Activated CD4-positive, alpha-beta memory T cell treated with anti-CD3 and anti-CD28 coated beads for 36 hours (primary cell): ENCODE measurements at regions of chr21 and their contacts with region 1.

Region 1: DNA sequence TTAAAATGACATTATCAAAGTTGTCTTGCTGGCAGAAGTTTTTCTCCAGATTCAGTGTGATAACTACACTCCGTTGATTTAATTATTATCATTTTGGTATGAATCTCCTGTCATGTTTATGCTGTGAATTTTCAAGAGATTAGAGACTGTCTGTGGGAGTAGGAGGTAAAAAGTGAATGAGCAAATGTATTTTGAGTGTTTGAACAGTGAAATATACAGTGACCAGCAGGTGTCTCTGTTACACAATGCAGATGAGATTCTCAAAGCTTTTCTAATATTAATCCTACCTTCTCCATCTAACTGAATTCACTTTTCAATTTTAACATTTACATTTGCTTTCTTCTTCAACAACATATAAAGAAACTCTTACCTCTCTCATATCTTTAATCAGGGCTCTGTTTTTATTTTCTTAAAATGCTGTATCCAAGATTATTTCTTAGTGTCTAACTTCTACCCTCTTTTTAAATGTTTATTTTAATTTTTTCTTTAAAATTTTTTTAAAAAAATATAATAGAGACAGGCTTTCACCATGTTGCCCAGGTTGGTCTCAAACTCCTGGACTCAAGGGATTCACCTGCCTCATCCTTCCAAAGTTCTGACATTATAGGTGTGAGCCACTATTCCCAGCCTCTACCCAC is 20.9 kb upstream of the HSPA13 start:
- DNase-seq: no peak
- H3K4me3 Mint-ChIP-seq: no peak overlapping the region
- H3K27ac Mint-ChIP-seq: no peak overlapping the region
- H3K4me1 Mint-ChIP-seq: no peaks in the 10 kb centered on the region
- H3K27me3 Mint-ChIP-seq: no peaks in the 10 kb centered on the region

Region 2: DNA sequence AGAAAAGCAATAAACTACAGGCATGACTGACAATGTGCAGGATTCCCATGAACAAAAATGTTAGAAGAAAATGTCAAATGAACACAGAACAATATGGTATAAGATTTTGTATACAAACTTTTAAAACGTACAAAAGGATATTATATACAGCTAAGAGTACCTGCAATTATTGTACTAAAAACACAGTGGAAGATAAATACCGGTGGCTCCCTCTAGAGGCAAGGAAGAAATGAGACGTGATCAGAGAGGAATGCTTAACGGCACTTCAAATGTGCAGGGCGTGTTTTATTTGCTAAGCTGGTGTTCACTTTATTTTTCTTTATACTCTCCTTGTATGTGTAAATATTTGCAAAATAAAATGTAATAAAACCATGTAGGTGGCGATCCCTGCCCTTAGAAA is 334.1 kb after region 1 on chr21:
- CTCF ChIA-PET with region 1: interaction called, 4 read pairs
- POLR2A ChIA-PET with region 1: no interaction called
- intact Hi-C with region 1: loop called (anchors 1 kb)
- DNase-seq: peak; percentile 38
- H3K4me3 Mint-ChIP-seq: no peak overlapping the region
- H3K27ac Mint-ChIP-seq: no peak overlapping the region
- H3K4me1 Mint-ChIP-seq: peaks cover 31% of the 10 kb centered on the region
- H3K27me3 Mint-ChIP-seq: no peaks in the 10 kb centered on the region

Region 3: GRCh38 chr21:14773777-14774345 is 370.1 kb after region 1 on chr21:
- CTCF ChIA-PET with region 1: interaction called, 5 read pairs
- POLR2A ChIA-PET with region 1: no interaction called
- intact Hi-C with region 1: loop called (anchors 1 kb)
- DNase-seq: peak; percentile 70
- H3K4me3 Mint-ChIP-seq: no peak overlapping the region
- H3K27ac Mint-ChIP-seq: no peak overlapping the region
- H3K4me1 Mint-ChIP-seq: no peaks in the 10 kb centered on the region
- H3K27me3 Mint-ChIP-seq: peaks cover 3% of the 10 kb centered on the region

Region 4: DNA sequence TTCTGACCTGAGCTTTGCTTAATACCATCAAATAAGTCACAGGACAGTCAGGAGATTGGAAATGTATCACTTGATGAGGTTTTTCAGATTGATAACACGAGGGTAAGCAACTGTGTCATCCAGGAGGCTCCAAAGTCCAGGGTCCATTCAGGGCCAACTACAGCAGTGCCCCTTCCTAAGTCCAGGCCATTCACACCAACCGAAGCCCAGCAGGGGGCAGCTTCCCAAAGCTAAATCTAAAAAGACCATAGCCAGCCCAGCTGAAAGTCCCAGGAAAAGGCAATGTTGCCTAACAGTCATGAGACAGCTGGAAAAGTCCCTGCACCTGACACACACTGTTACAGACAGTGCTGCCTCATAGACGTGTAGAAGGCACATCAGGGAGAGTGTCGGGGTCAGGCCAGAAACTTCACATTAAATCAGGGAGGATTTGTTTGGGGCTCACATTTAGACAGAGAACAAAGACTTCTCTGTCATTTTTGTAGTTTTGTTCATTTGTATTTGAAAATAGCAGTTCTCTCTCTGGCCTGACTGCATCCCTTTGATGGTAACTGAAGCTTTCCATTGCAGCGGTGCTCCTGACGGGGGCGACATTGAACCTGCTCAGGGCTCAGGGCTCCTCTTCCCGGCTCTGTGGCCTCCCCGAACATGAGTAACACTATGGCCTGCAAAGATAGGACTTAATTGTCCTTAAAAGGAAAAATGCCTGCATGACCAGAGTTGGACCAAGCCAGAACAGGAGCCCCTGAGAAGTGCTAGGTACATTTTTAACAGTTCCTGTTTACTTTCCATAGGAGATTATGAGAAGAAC is 460.6 kb after region 1 on chr21:
- CTCF ChIA-PET with region 1: interaction called, 3 read pairs
- POLR2A ChIA-PET with region 1: no interaction called
- intact Hi-C with region 1: loop called (anchors 2 kb)
- DNase-seq: peak; percentile 66
- H3K4me3 Mint-ChIP-seq: no peak overlapping the region
- H3K27ac Mint-ChIP-seq: no peak overlapping the region
- H3K4me1 Mint-ChIP-seq: no peaks in the 10 kb centered on the region
- H3K27me3 Mint-ChIP-seq: peaks cover 4% of the 10 kb centered on the region